RWPE1 (cell line): ENCODE measurements at regions of chr7 and their contacts with region 1.

Region 1: GRCh38 chr7:19491821-19492452 is 216.9 kb downstream of the POLR1F start:
- DNase-seq: peak; percentile 16
- H3K27ac ChIP-seq: no peak overlapping the region
- CTCF ChIP-seq: peak; percentile 81

Region 2: GRCh38 chr7:19121977-19122588 is 369.9 kb before region 1 on chr7:
- CTCF ChIA-PET with region 1: interaction called, 11 read pairs
- POLR2A ChIA-PET with region 1: no interaction called
- DNase-seq: no peak
- H3K27ac ChIP-seq: no peak overlapping the region
- CTCF ChIP-seq: peak; percentile 98